K562 (cell line): ENCODE measurements at regions of chr11 and their contacts with region 1.

Region 1: GRCh38 chr11:57562596-57562995 is 4.9 kb downstream of the UBE2L6 start:
- DNase-seq: peak in 1 of 4 experiments; percentile 37
- ATAC-seq: peak; percentile 74
- H3K4me3 ChIP-seq: no peak overlapping the region
- H3K27ac ChIP-seq: no peak overlapping the region
- H3K4me1 ChIP-seq: peaks cover 10 to 11% of the 10 kb centered on the region in 2 experiments; a peak in 4 of 5 replicates
- H3K27me3 ChIP-seq: no peaks in the 10 kb centered on the region; a peak in 1 of 5 replicates
- CTCF ChIP-seq: peak; percentile 28 to 54 (median 51); a peak in 4 of 6 replicates
- EP300 ChIP-seq: no peak
- POLR2A ChIP-seq: no peak
- RAD21 ChIP-seq: peak in 1 of 2 experiments; percentile 72; a peak in 3 of 4 replicates

Region 2: GRCh38 chr11:57474017-57474802 is 88.4 kb before region 1 on chr11:
- CTCF ChIA-PET with region 1: no interaction called
- POLR2A ChIA-PET with region 1: no interaction called
- in situ Hi-C with region 1: no loop called
- intact Hi-C with region 1: no loop called
- DNase-seq: peak; percentile 34 to 42 (median 36)
- ATAC-seq: peak; percentile 45
- H3K4me3 ChIP-seq: no peak overlapping the region
- H3K27ac ChIP-seq: no peak overlapping the region
- H3K4me1 ChIP-seq: peaks cover 23 to 31% of the 10 kb centered on the region in 2 experiments
- H3K27me3 ChIP-seq: no peaks in the 10 kb centered on the region
- CTCF ChIP-seq: no peak
- EP300 ChIP-seq: no peak
- POLR2A ChIP-seq: no peak
- RAD21 ChIP-seq: no peak

Region 3: GRCh38 chr11:57493507-57494503 is 68.8 kb before region 1 on chr11:
- CTCF ChIA-PET with region 1: interaction called, 3 read pairs
- POLR2A ChIA-PET with region 1: no interaction called
- in situ Hi-C with region 1: no loop called
- intact Hi-C with region 1: loop called (anchors 1 kb)
- DNase-seq: peak; percentile 68 to 78 (median 72)
- ATAC-seq: peak; percentile 89
- H3K4me3 ChIP-seq: no peak overlapping the region
- H3K27ac ChIP-seq: peak overlapping the region; percentile 67
- H3K4me1 ChIP-seq: peaks cover 1 to 7% of the 10 kb centered on the region in 2 experiments; a peak in 3 of 5 replicates
- H3K27me3 ChIP-seq: no peaks in the 10 kb centered on the region
- CTCF ChIP-seq: peak; percentile 78 to 98 (median 80)
- EP300 ChIP-seq: peak; percentile 74
- POLR2A ChIP-seq: no peak
- RAD21 ChIP-seq: peak; percentile 70 to 86